Activated B cell treated with CpG ODN at 0.5 μM for 24 hours (primary cell): ENCODE measurements at regions of chr1 and their contacts with region 1.

Region 1: GRCh38 chr1:149962123-149962548 is 25.5 kb upstream of the MTMR11 start:
- DNase-seq: no peak
- ATAC-seq: peak; percentile 60
- H3K4me3 Mint-ChIP-seq: no peak overlapping the region
- H3K27ac Mint-ChIP-seq: no peak overlapping the region
- H3K4me1 Mint-ChIP-seq: peaks cover 4% of the 10 kb centered on the region
- H3K27me3 Mint-ChIP-seq: peaks cover 2% of the 10 kb centered on the region
- CTCF ChIP-seq: peak; percentile 99

Region 2: DNA sequence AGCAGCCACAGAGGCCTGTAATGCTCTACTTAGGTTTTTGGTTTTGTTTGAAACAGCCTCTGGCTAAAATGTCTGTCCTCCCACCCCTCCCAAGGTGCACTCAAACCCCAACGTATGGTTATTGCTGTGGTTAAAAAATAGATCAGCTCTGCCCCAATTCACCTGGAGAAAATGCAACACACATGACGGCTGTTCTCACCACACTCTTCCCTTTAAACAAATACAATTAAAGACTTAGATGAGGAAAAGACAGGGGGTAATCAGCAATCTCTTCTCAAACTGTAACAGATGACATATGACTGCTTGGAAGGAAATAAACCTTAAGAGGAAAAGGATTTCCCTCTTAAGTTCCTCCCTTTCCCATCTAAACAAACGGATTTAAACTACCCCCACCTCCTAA is 19.3 kb before region 1 on chr1:
- CTCF ChIA-PET with region 1: no interaction called
- POLR2A ChIA-PET with region 1: interaction called, 10 read pairs
- intact Hi-C with region 1: no loop called
- DNase-seq: no peak
- ATAC-seq: no peak
- H3K4me3 Mint-ChIP-seq: no peak overlapping the region
- H3K27ac Mint-ChIP-seq: no peak overlapping the region
- H3K4me1 Mint-ChIP-seq: no peaks in the 10 kb centered on the region
- H3K27me3 Mint-ChIP-seq: no peaks in the 10 kb centered on the region
- CTCF ChIP-seq: no peak

Region 3: GRCh38 chr1:150010393-150011115 is 48.4 kb after region 1 on chr1 and contains the start of gene OTUD7B:
- CTCF ChIA-PET with region 1: interaction called, 3 read pairs
- POLR2A ChIA-PET with region 1: no interaction called
- intact Hi-C with region 1: loop called (anchors 5 kb)
- DNase-seq: peak; percentile 67
- ATAC-seq: peak; percentile 89
- H3K4me3 Mint-ChIP-seq: peak within 1 kb of the TSS; percentile 93
- H3K27ac Mint-ChIP-seq: peak within 1 kb of the TSS; percentile 68
- H3K4me1 Mint-ChIP-seq: peaks cover 15% of the 10 kb centered on the region
- H3K27me3 Mint-ChIP-seq: peaks cover 47% of the 10 kb centered on the region
- CTCF ChIP-seq: no peak
- total RNA-seq, gene OTUD7B: 4.3 and 4.8 TPM in 2 replicates

Region 4: GRCh38 chr1:150072959-150073358 is 110.8 kb after region 1 on chr1:
- CTCF ChIA-PET with region 1: interaction called, 9 read pairs
- POLR2A ChIA-PET with region 1: no interaction called
- intact Hi-C with region 1: loop called (anchors 2 kb)
- DNase-seq: no peak
- ATAC-seq: peak; percentile 69
- H3K4me3 Mint-ChIP-seq: no peak overlapping the region
- H3K27ac Mint-ChIP-seq: peak overlapping the region; percentile 5
- H3K4me1 Mint-ChIP-seq: peaks cover 39% of the 10 kb centered on the region
- H3K27me3 Mint-ChIP-seq: no peaks in the 10 kb centered on the region
- CTCF ChIP-seq: no peak

Region 5: DNA sequence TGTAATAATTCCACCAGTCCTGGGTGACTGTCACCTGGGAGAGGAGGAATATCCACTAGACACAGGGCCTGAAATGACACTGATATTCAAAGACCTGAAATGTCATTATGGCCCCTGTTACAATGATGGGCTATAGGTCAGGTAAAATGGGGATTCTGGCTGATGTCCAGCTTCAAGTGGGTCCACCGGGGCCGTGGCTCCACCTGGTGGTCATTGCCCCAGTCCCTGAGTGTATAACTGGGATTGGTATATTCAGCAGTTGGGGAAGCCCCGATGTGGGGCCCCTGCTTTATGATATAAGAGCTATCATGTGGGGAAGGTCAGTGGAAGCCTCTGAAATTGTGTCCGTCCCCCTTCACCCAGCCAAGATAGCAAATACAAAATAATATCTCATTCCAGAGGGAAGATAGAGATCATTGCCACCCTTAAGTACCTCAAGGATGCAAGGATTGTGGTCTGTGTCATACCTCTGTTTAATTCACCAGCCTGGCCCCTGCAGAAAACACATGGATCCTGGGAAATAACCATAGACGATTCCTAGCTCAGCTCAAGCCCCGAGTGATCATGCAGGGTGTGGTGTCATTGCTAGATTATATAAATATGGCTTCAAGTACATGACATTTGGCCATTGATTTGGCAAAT is 206.9 kb after region 1 on chr1:
- CTCF ChIA-PET with region 1: interaction called, 26 read pairs
- POLR2A ChIA-PET with region 1: no interaction called
- intact Hi-C with region 1: loop called (anchors 1 kb)
- DNase-seq: peak; percentile 45
- ATAC-seq: peak; percentile 64
- H3K4me3 Mint-ChIP-seq: no peak overlapping the region
- H3K27ac Mint-ChIP-seq: no peak overlapping the region
- H3K4me1 Mint-ChIP-seq: peaks cover 34% of the 10 kb centered on the region
- H3K27me3 Mint-ChIP-seq: no peaks in the 10 kb centered on the region
- CTCF ChIP-seq: no peak

Region 6: GRCh38 chr1:151311589-151312331 is 1349.6 kb after region 1 on chr1:
- CTCF ChIA-PET with region 1: no interaction called
- POLR2A ChIA-PET with region 1: no interaction called
- intact Hi-C with region 1: no loop called
- DNase-seq: no peak
- ATAC-seq: peak; percentile 98
- H3K4me3 Mint-ChIP-seq: no peak overlapping the region
- H3K27ac Mint-ChIP-seq: peak overlapping the region; percentile 19
- H3K4me1 Mint-ChIP-seq: peaks cover 21% of the 10 kb centered on the region
- H3K27me3 Mint-ChIP-seq: no peaks in the 10 kb centered on the region
- CTCF ChIP-seq: no peak